Activated CD4-positive, alpha-beta memory T cell treated with anti-CD3 and anti-CD28 coated beads for 36 hours (primary cell): ENCODE measurements at regions of chr14 and their contacts with region 1.

Region 1: DNA sequence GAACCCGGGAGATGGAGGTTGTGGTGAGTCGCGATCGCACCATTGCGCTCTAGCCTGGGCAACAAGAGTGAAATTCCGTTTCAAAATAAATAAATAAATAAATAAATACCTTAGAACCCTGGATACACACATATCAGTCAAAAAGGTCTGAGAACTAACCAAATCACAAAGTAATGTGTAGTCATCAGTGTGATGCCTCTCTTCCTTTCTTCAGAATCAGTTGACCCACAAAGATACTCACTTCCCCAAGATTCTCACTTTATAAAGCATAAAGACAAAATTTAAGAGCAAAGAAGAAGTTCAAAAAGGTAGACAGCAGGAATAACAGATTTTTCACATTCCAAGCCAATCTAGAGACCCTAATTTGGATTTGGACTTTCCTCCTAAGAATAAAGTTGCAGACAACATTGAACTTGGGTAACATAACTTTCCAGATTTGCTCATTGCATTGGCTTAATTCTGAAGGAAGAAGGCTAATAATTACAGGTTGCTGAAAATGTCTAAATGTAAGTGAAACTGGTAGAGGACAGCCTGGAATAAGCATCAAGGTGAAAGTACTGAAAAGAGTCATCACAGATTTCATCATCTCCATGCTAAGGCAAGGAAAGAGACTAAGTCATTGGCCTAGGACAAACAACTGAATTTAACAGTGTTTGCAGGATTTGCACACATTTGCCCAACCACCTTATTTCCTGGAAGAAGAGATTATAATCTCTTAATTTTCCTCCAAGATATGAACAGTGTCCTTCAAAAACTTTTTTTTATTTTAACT is 17.4 kb downstream of the TMED10 start:
- DNase-seq: no peak
- H3K4me3 Mint-ChIP-seq: no peak overlapping the region
- H3K27ac Mint-ChIP-seq: peak overlapping the region; percentile 24
- H3K4me1 Mint-ChIP-seq: peaks cover 69% of the 10 kb centered on the region
- H3K27me3 Mint-ChIP-seq: no peaks in the 10 kb centered on the region

Region 2: GRCh38 chr14:74922739-74923401 is 236.2 kb before region 1 on chr14 and contains the start of gene RPS6KL1:
- CTCF ChIA-PET with region 1: no interaction called
- POLR2A ChIA-PET with region 1: no interaction called
- intact Hi-C with region 1: no loop called
- DNase-seq: peak; percentile 82
- H3K4me3 Mint-ChIP-seq: peak within 1 kb of the TSS; percentile 57
- H3K27ac Mint-ChIP-seq: no peak within 1 kb of the TSS
- H3K4me1 Mint-ChIP-seq: peaks cover 8% of the 10 kb centered on the region
- H3K27me3 Mint-ChIP-seq: peaks cover 7% of the 10 kb centered on the region
- total RNA-seq, gene RPS6KL1: 4.2 to 4.9 TPM

Region 3: GRCh38 chr14:75141967-75142366 is 17.1 kb before region 1 on chr14:
- CTCF ChIA-PET with region 1: interaction called, 5 read pairs
- POLR2A ChIA-PET with region 1: interaction called, 3 read pairs
- intact Hi-C with region 1: loop called (anchors 2 kb)
- DNase-seq: no peak
- H3K4me3 Mint-ChIP-seq: no peak overlapping the region
- H3K27ac Mint-ChIP-seq: no peak overlapping the region
- H3K4me1 Mint-ChIP-seq: peaks cover 58% of the 10 kb centered on the region
- H3K27me3 Mint-ChIP-seq: no peaks in the 10 kb centered on the region

Region 4: GRCh38 chr14:75176142-75176820 is 17.3 kb after region 1 on chr14 and contains the start of gene TMED10:
- CTCF ChIA-PET with region 1: interaction called, 3 read pairs
- POLR2A ChIA-PET with region 1: no interaction called
- intact Hi-C with region 1: loop called (anchors 1 kb)
- DNase-seq: peak; percentile 94
- H3K4me3 Mint-ChIP-seq: peak within 1 kb of the TSS; percentile 86
- H3K27ac Mint-ChIP-seq: peak within 1 kb of the TSS; percentile 98
- H3K4me1 Mint-ChIP-seq: peaks cover 42% of the 10 kb centered on the region
- H3K27me3 Mint-ChIP-seq: no peaks in the 10 kb centered on the region
- total RNA-seq, gene TMED10: 189 to 201 TPM

Region 5: GRCh38 chr14:75267141-75267721 is 108.2 kb after region 1 on chr14:
- CTCF ChIA-PET with region 1: no interaction called
- POLR2A ChIA-PET with region 1: no interaction called
- intact Hi-C with region 1: no loop called
- DNase-seq: no peak
- H3K4me3 Mint-ChIP-seq: no peak overlapping the region
- H3K27ac Mint-ChIP-seq: no peak overlapping the region
- H3K4me1 Mint-ChIP-seq: peaks cover 3% of the 10 kb centered on the region
- H3K27me3 Mint-ChIP-seq: peaks cover 2% of the 10 kb centered on the region